Activated CD8-positive, alpha-beta T cell treated with anti-CD3 and anti-CD28 coated beads for 36 hours (primary cell): ENCODE measurements at regions of chr17 and their contacts with region 1.

Region 1: DNA sequence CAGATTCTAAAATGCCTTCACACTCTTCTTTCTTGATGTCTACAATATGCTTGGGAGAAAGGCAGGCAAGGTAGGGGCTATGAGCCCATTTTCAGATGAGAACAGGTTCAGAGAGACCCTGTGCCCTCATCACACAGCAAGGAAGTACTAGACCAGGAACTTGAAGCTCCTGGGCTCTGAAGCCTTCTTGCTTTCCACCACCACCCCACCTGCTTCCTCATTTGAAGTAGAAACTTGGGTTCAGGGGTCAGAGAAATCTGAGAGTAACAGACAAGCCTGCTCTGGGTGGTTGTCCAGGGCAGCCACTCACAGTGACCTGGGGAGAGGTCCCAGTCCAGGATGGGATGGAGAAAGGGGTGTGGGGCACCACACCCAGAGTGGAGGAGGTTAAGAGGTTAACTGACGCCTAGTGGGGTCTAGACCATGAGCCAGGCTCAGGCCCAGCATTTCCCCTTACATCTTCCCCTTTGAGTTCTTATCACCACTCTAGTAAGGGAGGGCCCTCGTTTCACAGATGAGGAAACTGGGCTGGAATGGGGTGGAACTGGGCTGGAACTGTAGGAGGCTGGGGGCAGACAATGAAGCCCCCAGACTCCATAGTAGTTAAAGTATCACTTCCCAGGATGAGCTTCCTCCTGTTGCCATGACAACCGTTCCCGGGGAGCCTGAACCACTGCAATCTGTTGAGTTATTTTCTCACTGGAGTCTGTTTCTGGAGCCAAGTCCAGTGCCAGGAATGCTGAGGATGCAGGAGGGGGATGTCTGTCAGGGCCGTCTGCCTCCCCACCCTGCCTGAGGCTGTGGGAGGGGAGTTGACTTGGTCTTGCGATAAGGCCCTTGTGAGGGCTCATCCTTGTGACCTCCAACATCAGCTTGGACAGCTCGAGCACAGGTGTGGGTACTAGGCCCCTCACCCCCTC is 16.2 kb upstream of the PHF12 start:
- DNase-seq: no peak
- ATAC-seq: no peak
- H3K4me3 Mint-ChIP-seq: no peak overlapping the region
- H3K27ac Mint-ChIP-seq: no peak overlapping the region
- H3K4me1 Mint-ChIP-seq: no peaks in the 10 kb centered on the region
- H3K27me3 Mint-ChIP-seq: peaks cover 11% of the 10 kb centered on the region
- CTCF ChIP-seq: no peak

Region 2: GRCh38 chr17:28750178-28751047 is 217.1 kb before region 1 on chr17:
- CTCF ChIA-PET with region 1: no interaction called
- POLR2A ChIA-PET with region 1: no interaction called
- intact Hi-C with region 1: no loop called
- DNase-seq: peak; percentile 98
- ATAC-seq: peak; percentile 93
- H3K4me3 Mint-ChIP-seq: no peak overlapping the region
- H3K27ac Mint-ChIP-seq: peak overlapping the region; percentile 38
- H3K4me1 Mint-ChIP-seq: peaks cover 46% of the 10 kb centered on the region
- H3K27me3 Mint-ChIP-seq: no peaks in the 10 kb centered on the region
- CTCF ChIP-seq: peak; percentile 100

Region 3: DNA sequence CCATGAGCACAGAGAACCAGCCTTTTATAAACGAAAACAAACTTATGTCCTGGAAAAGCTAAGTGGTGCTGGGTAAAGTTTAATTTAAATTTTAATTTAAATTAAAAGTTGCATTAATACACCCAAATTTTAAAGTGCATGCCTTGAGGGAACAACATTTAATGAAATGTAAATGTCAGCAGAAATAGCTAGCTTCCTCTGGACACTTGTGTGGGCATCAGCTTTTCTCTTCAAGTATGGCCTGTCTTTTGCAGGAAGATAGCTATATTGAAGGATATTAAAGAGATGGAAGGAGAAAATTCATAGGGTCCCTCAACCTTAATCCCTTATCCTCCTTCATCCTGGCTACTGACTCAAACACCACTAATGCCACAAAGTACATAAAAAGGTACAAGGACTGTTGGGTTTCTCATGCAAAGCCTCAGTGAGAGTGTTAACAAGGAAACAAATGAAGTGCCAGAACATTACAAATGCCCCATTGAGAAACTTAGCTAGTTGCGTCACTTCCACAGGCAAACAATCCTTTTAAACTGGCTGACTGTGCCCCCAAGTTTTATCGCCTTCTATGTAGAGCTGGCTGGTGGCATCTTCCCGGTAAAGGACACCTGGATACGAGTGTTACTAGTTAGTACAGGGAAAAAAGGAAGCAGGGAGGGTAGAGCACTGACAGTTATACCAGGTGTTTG is 30.3 kb before region 1 on chr17:
- CTCF ChIA-PET with region 1: no interaction called
- POLR2A ChIA-PET with region 1: no interaction called
- intact Hi-C with region 1: no loop called
- DNase-seq: no peak
- ATAC-seq: no peak
- H3K4me3 Mint-ChIP-seq: no peak overlapping the region
- H3K27ac Mint-ChIP-seq: no peak overlapping the region
- H3K4me1 Mint-ChIP-seq: peaks cover 74% of the 10 kb centered on the region
- H3K27me3 Mint-ChIP-seq: no peaks in the 10 kb centered on the region
- CTCF ChIP-seq: no peak

Region 4: DNA sequence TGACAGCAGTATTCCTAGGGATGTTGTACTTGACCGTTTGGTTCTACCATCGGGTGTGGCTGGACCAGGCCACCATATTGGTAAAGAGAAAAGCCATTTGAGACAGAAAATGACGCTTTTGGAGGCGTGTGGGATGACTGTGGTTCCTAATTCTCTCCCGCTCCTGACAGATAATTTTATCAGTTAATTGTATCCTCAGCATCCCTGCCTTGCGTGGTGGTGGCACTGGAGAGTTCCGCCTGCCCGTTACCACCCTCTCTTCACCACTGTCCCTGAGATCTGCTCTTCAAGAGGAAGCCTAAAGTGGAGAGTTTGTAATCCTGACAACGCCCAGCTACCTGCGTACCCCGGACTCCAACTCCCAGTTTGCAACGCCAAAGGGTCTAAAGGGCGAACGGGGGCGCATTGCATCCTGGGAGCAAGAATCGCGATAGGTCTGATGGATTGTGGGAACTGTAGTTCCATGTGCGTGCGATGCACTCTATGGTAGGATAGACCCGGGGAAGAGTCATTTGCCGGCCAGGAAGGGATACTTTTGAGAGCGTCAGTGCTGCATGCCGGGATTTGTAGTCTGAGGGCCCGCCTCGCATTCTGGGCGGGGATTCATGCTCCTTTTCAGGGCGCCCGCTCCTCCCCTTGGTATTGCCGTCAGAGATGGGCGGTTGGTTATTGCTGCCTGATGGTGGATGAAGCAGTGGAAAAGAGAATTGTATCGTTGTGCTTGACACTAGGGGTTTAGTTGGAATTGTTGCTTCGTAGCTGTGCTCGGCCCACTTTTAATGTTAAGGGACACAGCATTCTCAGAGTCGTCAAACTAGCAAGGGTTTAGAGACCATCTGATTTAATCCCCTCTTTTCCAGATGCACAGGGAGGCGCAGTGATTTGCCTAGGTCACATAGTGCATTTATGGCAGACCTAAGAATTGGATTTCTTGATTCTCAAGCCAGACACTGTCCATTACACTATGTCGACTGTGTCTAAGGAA is 15.2 kb before region 1 on chr17:
- CTCF ChIA-PET with region 1: interaction called, 87 read pairs
- POLR2A ChIA-PET with region 1: interaction called, 5 read pairs
- intact Hi-C with region 1: no loop called
- DNase-seq: peak; percentile 98
- ATAC-seq: peak; percentile 75
- H3K4me3 Mint-ChIP-seq: no peak overlapping the region
- H3K27ac Mint-ChIP-seq: no peak overlapping the region
- H3K4me1 Mint-ChIP-seq: peaks cover 15% of the 10 kb centered on the region
- H3K27me3 Mint-ChIP-seq: no peaks in the 10 kb centered on the region
- CTCF ChIP-seq: no peak

Region 5: GRCh38 chr17:29019475-29020181 is 52.1 kb after region 1 on chr17:
- CTCF ChIA-PET with region 1: interaction called, 10 read pairs
- POLR2A ChIA-PET with region 1: no interaction called
- intact Hi-C with region 1: no loop called
- DNase-seq: peak; percentile 7
- ATAC-seq: peak; percentile 45
- H3K4me3 Mint-ChIP-seq: no peak overlapping the region
- H3K27ac Mint-ChIP-seq: no peak overlapping the region
- H3K4me1 Mint-ChIP-seq: peaks cover 6% of the 10 kb centered on the region
- H3K27me3 Mint-ChIP-seq: peaks cover 41% of the 10 kb centered on the region
- CTCF ChIP-seq: no peak

Region 6: DNA sequence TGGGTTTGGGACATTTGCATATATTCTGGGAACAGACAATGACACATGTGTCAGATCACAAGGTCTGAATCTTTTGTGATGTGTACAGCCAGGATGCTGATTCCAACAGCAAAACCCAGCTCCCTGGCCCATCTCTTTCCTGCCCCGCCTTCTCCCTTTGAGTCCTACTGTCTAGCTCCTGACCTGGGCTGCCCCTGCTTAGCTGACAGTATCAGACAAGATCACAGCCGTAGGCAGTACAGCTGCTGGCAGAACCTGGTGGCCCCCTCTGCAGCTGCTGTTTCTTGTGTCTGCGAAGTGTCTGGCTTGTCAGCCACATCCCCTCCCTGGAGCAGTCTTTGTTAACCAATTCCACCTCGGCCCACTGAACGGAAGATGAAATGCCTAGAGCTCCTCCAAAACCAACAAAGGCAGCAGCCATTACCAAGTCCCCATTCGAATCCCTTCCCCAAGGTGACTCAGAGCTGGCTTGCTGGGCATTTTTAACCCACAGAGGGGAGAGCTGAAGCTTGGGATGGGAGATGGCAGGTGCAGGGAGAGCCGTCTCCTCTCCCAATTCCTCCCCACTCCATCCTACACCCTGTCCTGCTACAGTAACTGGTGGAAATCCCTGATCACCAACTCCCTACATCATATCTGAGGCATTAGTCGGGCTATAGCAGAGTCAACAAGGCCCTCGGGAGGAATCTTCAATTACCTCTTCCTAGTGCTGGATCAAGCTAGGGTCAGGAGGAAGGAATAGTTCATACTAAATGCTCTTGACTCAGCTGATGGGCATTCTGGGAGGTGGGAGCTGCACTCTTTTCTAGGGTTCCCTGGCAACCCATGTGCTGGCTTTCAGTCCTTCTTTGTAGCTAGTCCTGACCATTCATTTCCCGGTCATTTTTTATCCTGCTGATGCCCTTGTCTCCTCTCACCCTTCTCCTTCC is 81.2 kb after region 1 on chr17:
- CTCF ChIA-PET with region 1: interaction called, 18 read pairs
- POLR2A ChIA-PET with region 1: no interaction called
- intact Hi-C with region 1: no loop called
- DNase-seq: no peak
- ATAC-seq: peak; percentile 20
- H3K4me3 Mint-ChIP-seq: no peak overlapping the region
- H3K27ac Mint-ChIP-seq: no peak overlapping the region
- H3K4me1 Mint-ChIP-seq: peaks cover 5% of the 10 kb centered on the region
- H3K27me3 Mint-ChIP-seq: no peaks in the 10 kb centered on the region
- CTCF ChIP-seq: no peak

Region 7: GRCh38 chr17:29111816-29112499 is 144.5 kb after region 1 on chr17:
- CTCF ChIA-PET with region 1: interaction called, 353 read pairs
- POLR2A ChIA-PET with region 1: interaction called, 3 read pairs
- intact Hi-C with region 1: loop called (anchors 2 kb)
- DNase-seq: peak; percentile 79
- ATAC-seq: peak; percentile 87
- H3K4me3 Mint-ChIP-seq: no peak overlapping the region
- H3K27ac Mint-ChIP-seq: no peak overlapping the region
- H3K4me1 Mint-ChIP-seq: peaks cover 9% of the 10 kb centered on the region
- H3K27me3 Mint-ChIP-seq: no peaks in the 10 kb centered on the region
- CTCF ChIP-seq: peak; percentile 91

Region 8: GRCh38 chr17:29133146-29133713 is 165.7 kb after region 1 on chr17:
- CTCF ChIA-PET with region 1: interaction called, 14 read pairs
- POLR2A ChIA-PET with region 1: no interaction called
- intact Hi-C with region 1: no loop called
- DNase-seq: no peak
- ATAC-seq: peak; percentile 53
- H3K4me3 Mint-ChIP-seq: no peak overlapping the region
- H3K27ac Mint-ChIP-seq: peak overlapping the region; percentile 15
- H3K4me1 Mint-ChIP-seq: peaks cover 59% of the 10 kb centered on the region
- H3K27me3 Mint-ChIP-seq: no peaks in the 10 kb centered on the region
- CTCF ChIP-seq: no peak

Region 9: DNA sequence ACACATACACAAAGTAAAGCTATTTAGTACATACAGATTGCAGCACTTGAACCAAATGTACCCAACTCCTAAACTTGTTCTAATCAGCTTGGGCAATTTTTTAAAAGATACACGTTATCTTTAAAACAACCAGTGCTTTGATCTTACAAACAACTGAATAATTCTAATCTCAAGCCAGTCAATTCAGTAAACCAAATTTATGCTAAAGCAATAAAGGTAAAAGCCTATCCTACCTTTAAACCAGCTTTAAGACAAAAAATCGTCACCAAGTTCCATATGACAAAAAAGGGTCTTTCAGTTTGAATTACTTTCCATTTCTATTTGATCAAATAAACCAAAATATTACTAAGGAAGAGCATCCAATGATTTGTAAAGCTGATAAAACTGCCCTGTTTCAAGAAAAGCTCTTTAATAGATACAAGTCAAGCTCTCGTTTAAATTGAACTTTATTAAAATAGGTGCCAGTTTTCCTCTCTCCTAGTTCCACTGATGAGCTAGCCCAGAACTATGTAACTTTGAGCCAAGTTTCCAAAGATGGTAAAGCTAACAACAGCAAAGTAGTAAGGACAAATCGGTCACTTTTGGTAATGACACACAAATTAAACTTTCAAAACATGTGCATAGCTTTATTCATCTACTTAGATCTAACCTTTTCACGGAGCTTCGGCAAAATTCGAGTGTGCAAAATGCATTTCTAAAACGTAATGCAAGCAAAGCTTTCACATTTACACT is 289.4 kb after region 1 on chr17:
- CTCF ChIA-PET with region 1: no interaction called
- POLR2A ChIA-PET with region 1: no interaction called
- intact Hi-C with region 1: no loop called
- DNase-seq: no peak
- ATAC-seq: no peak
- H3K4me3 Mint-ChIP-seq: no peak overlapping the region
- H3K27ac Mint-ChIP-seq: peak overlapping the region; percentile 71
- H3K4me1 Mint-ChIP-seq: peaks cover 31% of the 10 kb centered on the region
- H3K27me3 Mint-ChIP-seq: no peaks in the 10 kb centered on the region
- CTCF ChIP-seq: no peak